K562 (cell line): ENCODE measurements at regions of chr10 and their contacts with region 1.

Region 1: GRCh38 chr10:23314835-23315239 is 29.8 kb downstream of the C10orf67 start:
- DNase-seq: peak; percentile 14 to 71 (median 26)
- ATAC-seq: peak; percentile 66; the same call in 2 of the 3 replicates
- H3K4me3 ChIP-seq: no peak overlapping the region
- H3K27ac ChIP-seq: no peak overlapping the region
- H3K4me1 ChIP-seq: no peaks in the 10 kb centered on the region
- H3K27me3 ChIP-seq: no peaks in the 10 kb centered on the region; a peak in 1 of 5 replicates
- CTCF ChIP-seq: peak; percentile 36 to 80 (median 53); a peak in 4 of 6 replicates
- EP300 ChIP-seq: no peak
- POLR2A ChIP-seq: no peak
- RAD21 ChIP-seq: peak; percentile 83 to 85

Region 2: DNA sequence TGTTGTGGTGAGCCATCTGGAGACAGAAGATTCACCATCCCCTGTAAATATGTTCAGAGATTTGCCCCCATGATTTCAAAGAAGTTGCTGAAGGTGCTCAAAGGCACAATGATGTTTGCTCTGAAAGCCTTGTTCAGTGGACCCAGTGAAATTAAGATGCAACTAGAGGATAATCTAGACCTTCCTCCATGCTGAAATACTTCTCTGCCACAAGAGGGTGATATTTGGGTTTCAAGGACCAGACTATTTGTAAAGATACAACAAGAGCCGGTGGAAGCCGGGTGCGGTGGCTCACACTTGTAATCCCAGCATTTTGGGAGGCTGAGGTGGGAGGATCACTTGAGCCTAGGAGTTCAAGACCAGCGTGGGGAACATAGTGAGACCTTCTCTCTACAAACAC is 232.9 kb before region 1 on chr10:
- CTCF ChIA-PET with region 1: no interaction called
- POLR2A ChIA-PET with region 1: no interaction called
- in situ Hi-C with region 1: no loop called
- intact Hi-C with region 1: no loop called
- DNase-seq: peak in 3 of 4 experiments; percentile 17 to 52 (median 43)
- ATAC-seq: peak; percentile 93
- H3K4me3 ChIP-seq: no peak overlapping the region
- H3K27ac ChIP-seq: no peak overlapping the region
- H3K4me1 ChIP-seq: no peaks in the 10 kb centered on the region
- H3K27me3 ChIP-seq: peaks cover 0 to 4% of the 10 kb centered on the region in 2 experiments; a peak in 1 of 5 replicates
- CTCF ChIP-seq: peak; percentile 49 to 56 (median 55)
- EP300 ChIP-seq: no peak
- POLR2A ChIP-seq: no peak
- RAD21 ChIP-seq: peak in 1 of 2 experiments; percentile 57; a peak in 3 of 4 replicates

Region 3: GRCh38 chr10:23525406-23525805 is 210.6 kb after region 1 on chr10:
- CTCF ChIA-PET with region 1: interaction called, 7 read pairs
- POLR2A ChIA-PET with region 1: no interaction called
- in situ Hi-C with region 1: loop called (anchors 10 kb)
- intact Hi-C with region 1: loop called (anchors 2 kb)
- DNase-seq: no peak
- ATAC-seq: no peak
- H3K4me3 ChIP-seq: no peak overlapping the region
- H3K27ac ChIP-seq: no peak overlapping the region
- H3K4me1 ChIP-seq: no peaks in the 10 kb centered on the region
- H3K27me3 ChIP-seq: no peaks in the 10 kb centered on the region
- CTCF ChIP-seq: 0 out of 6 replicates have a peak, but pooled peaks of 1 of the 3 experiments have one; percentile 24
- EP300 ChIP-seq: no peak
- POLR2A ChIP-seq: no peak
- RAD21 ChIP-seq: peak in 1 of 2 experiments; percentile 31; a peak in 1 of 4 replicates

Region 4: GRCh38 chr10:23604613-23605012 is 289.8 kb after region 1 on chr10:
- CTCF ChIA-PET with region 1: no interaction called
- POLR2A ChIA-PET with region 1: no interaction called
- in situ Hi-C with region 1: no loop called
- intact Hi-C with region 1: no loop called
- DNase-seq: no peak
- ATAC-seq: no peak
- H3K4me3 ChIP-seq: no peak overlapping the region
- H3K27ac ChIP-seq: no peak overlapping the region
- H3K4me1 ChIP-seq: no peaks in the 10 kb centered on the region
- H3K27me3 ChIP-seq: no peaks in the 10 kb centered on the region
- CTCF ChIP-seq: no peak
- EP300 ChIP-seq: no peak
- POLR2A ChIP-seq: no peak
- RAD21 ChIP-seq: no peak

Region 5: DNA sequence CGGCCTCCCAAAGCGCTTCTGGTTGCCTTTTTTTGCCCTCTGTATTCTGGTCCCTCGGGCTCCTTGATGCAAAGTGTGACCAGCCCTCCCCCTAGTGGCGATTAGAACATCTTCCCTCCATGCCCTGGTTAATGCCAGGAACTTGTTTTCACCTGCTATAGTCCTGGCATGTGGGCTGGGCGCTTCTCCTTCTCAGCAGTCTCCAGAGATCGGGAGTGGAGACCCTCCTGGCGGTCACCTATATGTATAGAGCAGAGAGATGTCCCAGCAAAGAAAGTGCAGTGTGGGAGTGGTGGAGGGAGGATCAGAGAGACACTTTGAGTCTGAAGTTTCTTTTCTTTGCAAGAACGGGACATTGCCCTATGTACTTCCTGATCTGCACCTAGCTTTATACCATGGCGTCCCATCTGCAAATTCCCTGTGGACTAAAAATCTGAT is 388.2 kb after region 1 on chr10:
- CTCF ChIA-PET with region 1: interaction called, 11 read pairs
- POLR2A ChIA-PET with region 1: no interaction called
- in situ Hi-C with region 1: no loop called
- intact Hi-C with region 1: loop called (anchors 1 kb)
- DNase-seq: peak; percentile 14 to 53 (median 20)
- ATAC-seq: peak; percentile 81
- H3K4me3 ChIP-seq: no peak overlapping the region
- H3K27ac ChIP-seq: no peak overlapping the region
- H3K4me1 ChIP-seq: no peaks in the 10 kb centered on the region
- H3K27me3 ChIP-seq: no peaks in the 10 kb centered on the region
- CTCF ChIP-seq: peak; percentile 52 to 57 (median 55)
- EP300 ChIP-seq: no peak
- POLR2A ChIP-seq: no peak
- RAD21 ChIP-seq: peak; percentile 40 to 51

Region 6: DNA sequence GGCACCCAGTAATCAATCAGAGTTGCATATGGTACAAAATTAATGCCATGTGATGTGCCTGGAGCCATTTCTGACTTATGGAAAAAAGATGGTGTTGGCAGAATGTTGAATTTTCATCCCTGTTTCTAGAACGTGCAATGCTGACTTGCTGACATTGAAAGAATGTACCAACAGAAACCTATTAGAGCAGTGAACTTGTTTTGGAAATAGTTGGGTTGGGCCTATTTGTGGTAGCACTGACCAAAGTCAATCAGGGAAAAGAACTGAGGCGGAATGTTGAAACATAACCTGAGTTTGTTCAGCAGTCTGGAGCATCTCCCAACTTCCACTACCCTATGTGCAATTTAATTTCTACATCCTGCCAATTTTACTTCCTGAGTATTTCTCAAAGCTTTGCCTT is 882.4 kb after region 1 on chr10:
- CTCF ChIA-PET with region 1: interaction called, 3 read pairs
- POLR2A ChIA-PET with region 1: no interaction called
- in situ Hi-C with region 1: loop called (anchors 25 kb)
- intact Hi-C with region 1: loop called (anchors 5 kb)
- DNase-seq: no peak
- ATAC-seq: no peak
- H3K4me3 ChIP-seq: no peak overlapping the region
- H3K27ac ChIP-seq: no peak overlapping the region
- H3K4me1 ChIP-seq: no peaks in the 10 kb centered on the region
- H3K27me3 ChIP-seq: no peaks in the 10 kb centered on the region
- CTCF ChIP-seq: no peak
- EP300 ChIP-seq: no peak
- POLR2A ChIP-seq: no peak
- RAD21 ChIP-seq: no peak

Region 7: DNA sequence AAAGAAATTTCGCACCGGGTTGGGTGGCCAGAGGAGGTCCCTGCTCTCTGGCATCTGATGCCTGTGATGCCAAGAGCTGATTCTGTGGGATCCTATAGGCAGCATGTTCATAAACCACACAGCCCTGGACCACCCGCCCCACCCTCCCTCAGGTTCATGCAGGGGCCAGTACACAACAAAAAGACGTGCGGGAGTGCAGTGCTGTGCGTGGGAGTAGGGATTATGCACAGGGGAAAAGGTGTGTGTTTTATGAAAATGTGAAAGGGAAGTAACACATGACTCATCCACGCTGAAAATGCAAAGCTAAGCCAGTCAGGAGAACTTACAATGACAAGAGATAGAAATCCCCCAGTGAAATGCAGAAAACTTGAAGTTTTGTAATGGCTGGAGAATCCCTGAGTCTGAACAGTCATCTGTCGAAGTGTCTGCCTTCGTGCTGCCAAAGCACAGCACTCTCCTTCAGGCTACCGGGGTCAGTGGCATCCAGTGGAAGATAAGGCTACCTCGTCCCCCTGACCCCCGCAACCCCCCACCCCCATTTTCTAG is 895.2 kb after region 1 on chr10:
- CTCF ChIA-PET with region 1: no interaction called
- POLR2A ChIA-PET with region 1: no interaction called
- in situ Hi-C with region 1: loop called (anchors 25 kb)
- intact Hi-C with region 1: no loop called
- DNase-seq: no peak
- ATAC-seq: no peak
- H3K4me3 ChIP-seq: no peak overlapping the region
- H3K27ac ChIP-seq: no peak overlapping the region
- H3K4me1 ChIP-seq: no peaks in the 10 kb centered on the region
- H3K27me3 ChIP-seq: peaks cover 0 to 4% of the 10 kb centered on the region in 2 experiments; a peak in 1 of 5 replicates
- CTCF ChIP-seq: no peak
- EP300 ChIP-seq: no peak
- POLR2A ChIP-seq: no peak
- RAD21 ChIP-seq: no peak